ENCODE measurements at regions of chr15 and their contacts with region 1.

Region 1: GRCh38 chr15:77305953-77306352 is 114.0 kb downstream of the PEAK1 start:
- DNase-seq: no peak
- ATAC-seq: no peak
- H3K4me3 ChIP-seq: no peak overlapping the region
- H3K4me3 Mint-ChIP-seq: no peak overlapping the region
- H3K27ac ChIP-seq: no peak overlapping the region
- H3K27ac Mint-ChIP-seq: no peak overlapping the region
- H3K4me1 ChIP-seq: no peaks in the 10 kb centered on the region
- H3K4me1 Mint-ChIP-seq: peaks cover 0 to 11% (median 6%) of the 10 kb centered on the region in 7 donors
- H3K27me3 ChIP-seq: no peaks in the 10 kb centered on the region
- H3K27me3 Mint-ChIP-seq: no peaks in the 10 kb centered on the region

Region 2: DNA sequence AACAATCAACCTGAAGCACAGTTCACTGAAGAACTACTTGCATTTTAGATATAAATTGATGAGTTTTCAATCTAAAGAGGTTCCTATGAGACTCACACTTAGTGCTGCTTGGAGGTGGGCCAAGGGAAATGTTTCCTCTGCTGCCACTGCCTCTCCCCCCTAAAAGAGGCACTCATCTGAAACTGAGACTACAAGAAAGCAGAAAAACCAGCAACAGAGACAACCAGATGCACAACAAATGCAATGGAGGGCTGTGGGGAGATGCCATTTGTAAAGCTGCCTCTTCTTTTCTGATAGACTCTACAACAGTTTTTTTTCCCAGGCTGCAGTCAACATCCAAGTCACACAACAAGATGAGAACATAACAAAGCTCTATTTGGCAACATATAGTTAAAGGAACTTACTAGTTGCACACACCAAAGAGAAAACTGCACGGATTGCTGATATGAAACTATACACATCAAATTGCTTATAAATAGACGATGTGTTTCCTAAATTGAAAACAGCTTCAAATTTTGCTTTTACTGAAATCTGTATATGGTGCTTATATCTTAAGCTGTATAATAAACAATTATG is 246.1 kb before region 1 on chr15:
- CTCF ChIA-PET with region 1: no interaction called
- POLR2A ChIA-PET with region 1: no interaction called
- intact Hi-C with region 1: no loop called
- DNase-seq: no peak
- ATAC-seq: no peak
- H3K4me3 ChIP-seq: no peak overlapping the region
- H3K4me3 Mint-ChIP-seq: peak overlapping the region in 1 of 10 donors; percentile 5
- H3K27ac ChIP-seq: no peak overlapping the region
- H3K27ac Mint-ChIP-seq: peak overlapping the region in 4 of 9 donors; percentile 10 to 50 (median 40)
- H3K4me1 ChIP-seq: peaks cover 0 to 3% of the 10 kb centered on the region in 2 donors
- H3K4me1 Mint-ChIP-seq: peaks cover 18 to 46% (median 28%) of the 10 kb centered on the region in 7 donors
- H3K27me3 ChIP-seq: no peaks in the 10 kb centered on the region
- H3K27me3 Mint-ChIP-seq: no peaks in the 10 kb centered on the region

Region 3: DNA sequence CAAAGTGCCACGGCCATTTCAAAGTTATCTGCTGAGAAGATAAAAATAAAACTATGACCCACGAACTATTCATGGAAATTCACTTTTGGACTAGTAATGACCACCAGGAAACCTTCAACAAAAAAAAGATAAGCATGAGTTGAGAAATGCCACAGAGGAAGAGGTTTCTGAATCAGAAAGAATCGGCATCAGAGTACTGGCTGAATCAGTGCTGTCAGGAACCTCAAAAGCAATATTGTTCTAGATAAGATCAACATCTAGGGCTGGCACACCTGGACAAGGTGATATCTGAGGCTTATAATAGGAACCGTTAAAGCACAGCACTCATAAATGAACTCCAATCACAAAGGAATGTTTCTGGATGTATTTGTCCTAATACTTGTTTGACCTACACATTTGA is 41.3 kb after region 1 on chr15:
- CTCF ChIA-PET with region 1: no interaction called
- POLR2A ChIA-PET with region 1: no interaction called
- intact Hi-C with region 1: loop called in 1 of 2 experiments (anchors 5 kb)
- DNase-seq: no peak
- ATAC-seq: peak; percentile 26
- H3K4me3 ChIP-seq: no peak overlapping the region
- H3K4me3 Mint-ChIP-seq: no peak overlapping the region
- H3K27ac ChIP-seq: no peak overlapping the region
- H3K27ac Mint-ChIP-seq: no peak overlapping the region
- H3K4me1 ChIP-seq: no peaks in the 10 kb centered on the region
- H3K4me1 Mint-ChIP-seq: peaks cover 0 to 5% (median 0%) of the 10 kb centered on the region in 7 donors
- H3K27me3 ChIP-seq: no peaks in the 10 kb centered on the region
- H3K27me3 Mint-ChIP-seq: no peaks in the 10 kb centered on the region

Measured in naive thymus-derived CD4-positive, alpha-beta T cell (primary cell).